ENCODE measurements at regions of chr20 and their contacts with region 1.

Region 1: GRCh38 chr20:12970372-12970821 is 38.4 kb upstream of the SPTLC3 start:
- DNase-seq: peak; percentile 29
- ATAC-seq: no peak
- H3K4me3 Mint-ChIP-seq: no peak overlapping the region
- H3K27ac Mint-ChIP-seq: no peak overlapping the region
- H3K4me1 Mint-ChIP-seq: peaks cover 17% of the 10 kb centered on the region
- H3K27me3 Mint-ChIP-seq: no peaks in the 10 kb centered on the region

Region 2: DNA sequence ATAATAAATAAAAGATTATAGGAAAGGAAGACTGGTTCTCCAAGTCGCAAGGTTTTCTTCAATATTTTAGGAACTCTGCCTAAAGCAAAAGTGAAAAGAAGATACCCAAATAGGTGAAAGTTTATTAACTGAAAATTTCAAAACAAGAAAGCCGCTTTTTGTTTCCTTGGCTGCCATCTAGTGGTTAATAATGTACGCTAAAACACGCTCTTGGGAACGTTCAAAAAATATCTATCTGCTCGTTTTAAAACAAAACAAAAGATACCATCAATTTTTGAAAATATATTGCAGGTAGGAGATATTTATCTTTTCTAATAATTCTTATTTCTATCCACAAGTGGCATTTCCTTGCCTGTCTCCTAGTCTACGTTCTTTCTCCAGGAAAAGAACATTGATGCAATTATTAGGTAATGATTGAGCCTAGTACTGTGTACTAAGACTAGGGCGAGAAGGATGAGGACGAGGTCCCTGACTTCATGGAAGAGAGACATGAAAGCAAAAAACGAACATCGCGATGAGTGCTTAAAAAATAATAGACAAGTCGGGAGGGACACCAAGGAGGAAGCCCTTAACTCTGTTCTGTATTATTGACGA is 135.6 kb after region 1 on chr20:
- CTCF ChIA-PET with region 1: interaction called, 25 read pairs
- POLR2A ChIA-PET with region 1: no interaction called
- intact Hi-C with region 1: loop called (anchors 1 kb)
- DNase-seq: no peak
- ATAC-seq: no peak
- H3K4me3 Mint-ChIP-seq: no peak overlapping the region
- H3K27ac Mint-ChIP-seq: no peak overlapping the region
- H3K4me1 Mint-ChIP-seq: no peaks in the 10 kb centered on the region
- H3K27me3 Mint-ChIP-seq: peaks cover 3% of the 10 kb centered on the region

Region 3: DNA sequence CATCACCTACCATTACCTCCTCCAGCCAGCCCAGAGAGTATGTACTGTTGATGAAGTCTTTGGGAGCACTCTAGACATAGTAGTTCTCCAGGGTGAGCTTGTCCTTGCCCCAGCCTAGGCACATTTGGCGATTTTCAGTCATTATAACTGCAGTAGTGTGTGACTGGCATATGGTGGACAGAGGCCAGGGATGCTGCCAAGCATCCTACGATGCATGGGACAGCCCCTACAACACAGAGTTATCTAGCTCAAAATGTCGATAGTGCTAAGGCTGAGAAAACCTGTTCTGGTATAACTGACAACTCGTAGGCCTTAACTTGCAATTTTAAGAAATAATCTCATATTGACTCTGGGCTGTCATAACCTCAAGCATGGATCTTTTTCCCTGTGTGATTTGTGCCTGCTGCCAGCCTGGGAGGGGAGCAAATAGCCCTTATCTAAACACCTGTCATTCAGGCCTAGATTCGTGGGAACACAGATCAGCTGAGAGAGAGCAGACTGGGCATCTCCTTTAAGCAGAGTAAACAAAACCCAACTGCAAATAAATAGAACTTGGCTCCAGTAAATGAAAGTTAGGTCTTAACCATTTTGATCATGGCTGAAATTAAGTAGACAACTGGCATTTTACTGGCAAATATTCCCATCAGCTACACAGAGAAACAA is 141.0 kb after region 1 on chr20:
- CTCF ChIA-PET with region 1: interaction called, 24 read pairs
- POLR2A ChIA-PET with region 1: no interaction called
- intact Hi-C with region 1: loop called (anchors 1 kb)
- DNase-seq: no peak
- ATAC-seq: no peak
- H3K4me3 Mint-ChIP-seq: no peak overlapping the region
- H3K27ac Mint-ChIP-seq: no peak overlapping the region
- H3K4me1 Mint-ChIP-seq: no peaks in the 10 kb centered on the region
- H3K27me3 Mint-ChIP-seq: peaks cover under 1% of the 10 kb centered on the region

Region 4: DNA sequence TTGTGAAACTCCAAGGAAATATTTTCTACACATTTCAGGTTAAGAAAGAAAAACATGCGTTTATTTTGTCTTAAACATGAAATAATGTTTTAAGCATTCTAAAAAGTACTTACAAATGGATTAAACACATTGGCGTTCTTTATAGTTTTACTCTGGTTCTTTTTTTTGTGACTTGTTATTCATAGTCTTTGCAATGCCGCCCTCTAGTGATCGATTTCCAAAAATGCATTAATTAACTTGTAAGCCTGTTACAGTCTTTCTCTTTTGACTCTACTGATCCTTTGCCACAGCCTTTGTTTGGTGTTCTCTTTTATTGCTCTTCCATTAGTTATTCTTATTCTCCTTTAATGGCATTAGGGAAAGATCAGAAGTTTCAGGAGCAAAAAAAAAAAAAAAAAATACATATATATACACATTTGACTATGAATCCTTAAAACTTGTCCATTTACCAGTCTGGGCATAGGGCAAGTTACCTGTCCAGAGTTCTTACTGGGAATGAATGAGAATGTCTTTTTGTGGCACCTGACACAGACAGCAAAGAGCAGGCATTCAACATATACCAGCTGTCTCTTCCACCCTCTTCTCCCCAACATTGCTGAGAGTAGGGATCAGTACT is 1084.8 kb after region 1 on chr20:
- CTCF ChIA-PET with region 1: no interaction called
- POLR2A ChIA-PET with region 1: no interaction called
- intact Hi-C with region 1: loop called in 1 of 2 experiments (anchors 10 kb)
- DNase-seq: peak; percentile 9
- ATAC-seq: no peak
- H3K4me3 Mint-ChIP-seq: no peak overlapping the region
- H3K27ac Mint-ChIP-seq: no peak overlapping the region
- H3K4me1 Mint-ChIP-seq: no peaks in the 10 kb centered on the region
- H3K27me3 Mint-ChIP-seq: peaks cover 2% of the 10 kb centered on the region

Measured in activated CD4-positive, alpha-beta T cell treated with anti-CD3 and anti-CD28 coated beads for 36 hours (primary cell).